ENCODE measurements at regions of chr1 and their contacts with region 1.

Region 1: DNA sequence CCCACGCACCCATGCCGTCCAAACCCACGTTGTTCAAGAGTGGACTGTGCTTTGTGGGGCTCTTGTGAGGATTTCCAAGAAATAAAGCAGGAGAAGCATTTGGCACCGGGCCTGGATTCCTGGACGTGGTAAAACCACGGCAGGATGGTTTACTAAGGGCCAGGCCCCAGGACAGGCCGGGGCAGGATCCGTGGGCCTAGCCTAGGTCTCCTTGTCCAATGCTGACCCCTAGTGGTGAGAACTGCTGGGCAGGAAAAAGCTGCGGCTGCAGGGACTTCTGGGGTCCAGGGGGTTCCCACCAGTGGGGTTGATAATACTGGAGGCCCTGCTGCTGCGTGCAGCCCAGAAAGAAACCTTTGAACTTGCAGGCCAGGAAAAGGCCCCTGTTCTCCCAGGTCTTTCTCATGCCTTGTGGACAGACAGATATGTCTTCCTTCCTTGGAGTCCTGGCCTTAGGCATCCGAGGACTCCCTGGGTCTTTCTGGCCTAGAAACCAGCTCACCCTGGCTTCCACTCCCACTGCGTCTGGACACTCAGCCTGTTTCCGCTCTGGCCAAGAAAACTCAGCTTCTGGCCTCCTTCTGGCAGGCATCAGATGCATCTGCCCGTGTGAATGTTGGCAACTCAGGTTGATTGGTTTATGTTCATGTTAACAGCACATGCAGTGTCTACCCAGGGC is 106.9 kb upstream of the TMEM51 start:
- DNase-seq: peak; percentile 65
- H3K4me3 ChIP-seq: no peak overlapping the region
- H3K27ac ChIP-seq: no peak overlapping the region
- H3K4me1 ChIP-seq: no peaks in the 10 kb centered on the region
- H3K27me3 ChIP-seq: no peaks in the 10 kb centered on the region
- CTCF ChIP-seq: peak; percentile 82 to 93 (median 87)
- EP300 ChIP-seq: no peak
- POLR2A ChIP-seq: no peak

Region 2: GRCh38 chr1:13960375-13960987 is 1086.1 kb before region 1 on chr1:
- in situ Hi-C with region 1: loop called in 2 of 4 experiments (anchors 10 to 25 kb)
- intact Hi-C with region 1: no loop called
- DNase-seq: peak; percentile 73
- H3K4me3 ChIP-seq: no peak overlapping the region
- H3K27ac ChIP-seq: no peak overlapping the region
- H3K4me1 ChIP-seq: no peaks in the 10 kb centered on the region
- H3K27me3 ChIP-seq: no peaks in the 10 kb centered on the region
- CTCF ChIP-seq: peak; percentile 94 to 98 (median 97)
- EP300 ChIP-seq: no peak
- POLR2A ChIP-seq: no peak

Region 3: GRCh38 chr1:14113841-14114567 is 932.6 kb before region 1 on chr1:
- in situ Hi-C with region 1: loop called in 1 of 4 experiments (anchors 25 kb)
- intact Hi-C with region 1: no loop called
- DNase-seq: peak; percentile 19
- H3K4me3 ChIP-seq: no peak overlapping the region
- H3K27ac ChIP-seq: no peak overlapping the region
- H3K4me1 ChIP-seq: no peaks in the 10 kb centered on the region
- H3K27me3 ChIP-seq: no peaks in the 10 kb centered on the region
- CTCF ChIP-seq: peak in 4 of 5 experiments; percentile 20 to 40 (median 29)
- EP300 ChIP-seq: no peak
- POLR2A ChIP-seq: no peak

Region 4: GRCh38 chr1:14778898-14779865 is 267.4 kb before region 1 on chr1:
- in situ Hi-C with region 1: loop called in 2 of 4 experiments (anchors 25 kb)
- intact Hi-C with region 1: no loop called
- DNase-seq: peak; percentile 30
- H3K4me3 ChIP-seq: no peak overlapping the region
- H3K27ac ChIP-seq: no peak overlapping the region
- H3K4me1 ChIP-seq: no peaks in the 10 kb centered on the region
- H3K27me3 ChIP-seq: no peaks in the 10 kb centered on the region
- CTCF ChIP-seq: peak; percentile 48 to 70 (median 56)
- EP300 ChIP-seq: no peak
- POLR2A ChIP-seq: no peak

Region 5: GRCh38 chr1:15188130-15188524 is 141.5 kb after region 1 on chr1:
- in situ Hi-C with region 1: no loop called
- intact Hi-C with region 1: no loop called
- DNase-seq: no peak
- H3K4me3 ChIP-seq: no peak overlapping the region
- H3K27ac ChIP-seq: peak overlapping the region; percentile 39 to 69 (median 64)
- H3K4me1 ChIP-seq: peaks cover 20 to 56% (median 34%) of the 10 kb centered on the region in 4 donors
- H3K27me3 ChIP-seq: no peaks in the 10 kb centered on the region
- CTCF ChIP-seq: no peak
- EP300 ChIP-seq: no peak
- POLR2A ChIP-seq: no peak